Right lobe of liver (tissue), 6 donors: ENCODE measurements at regions of chr7 and their contacts with region 1.

Region 1: DNA sequence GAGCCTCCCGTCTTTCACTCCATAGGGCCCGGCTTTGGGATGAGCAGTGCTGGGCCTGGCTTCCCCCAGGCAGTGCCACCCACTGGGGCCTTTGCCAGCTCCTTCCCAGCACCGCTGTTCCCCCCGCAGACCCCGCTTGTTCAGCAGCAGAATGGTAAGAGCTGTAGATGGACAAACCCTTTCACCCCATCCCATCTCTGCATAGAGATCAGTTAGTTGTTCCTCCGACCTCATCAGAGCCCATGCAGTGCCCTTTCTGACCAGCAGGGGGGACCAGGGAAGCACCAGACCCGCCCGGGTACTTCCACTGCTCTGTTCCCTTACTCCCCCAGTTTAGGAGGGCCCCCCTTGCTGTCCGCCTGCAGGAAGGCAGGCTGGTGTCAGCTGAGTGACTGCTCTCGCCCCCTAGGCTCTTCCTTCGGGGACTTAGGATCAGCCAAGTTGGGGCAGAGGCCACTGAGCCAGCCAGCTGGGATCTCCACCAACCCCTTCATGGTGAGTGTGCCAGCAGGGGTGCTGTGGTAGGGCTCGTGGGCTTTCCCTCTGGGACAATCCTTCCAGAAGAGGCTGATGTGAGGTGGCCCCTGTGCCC is 9.8 kb downstream of the SAP25 start:
- DNase-seq: peak in 2 of 3 donors; percentile 79 to 85
- ATAC-seq: peak; percentile 16 to 37 (median 30)
- H3K4me3 ChIP-seq: no peak overlapping the region
- H3K27ac ChIP-seq: peak overlapping the region in 2 of 3 donors; percentile 40 to 96
- H3K4me1 ChIP-seq: peaks cover 0 to 53% (median 26%) of the 10 kb centered on the region in 4 donors
- H3K27me3 ChIP-seq: no peaks in the 10 kb centered on the region
- CTCF ChIP-seq: peak; percentile 90 to 94 (median 91)
- POLR2A ChIP-seq: no peak

Region 2: GRCh38 chr7:100469227-100470044 is 94.5 kb before region 1 on chr7:
- intact Hi-C with region 1: loop called in 1 of 2 experiments (anchors 5 kb)
- DNase-seq: peak; percentile 88
- ATAC-seq: peak; percentile 85 to 93 (median 89)
- H3K4me3 ChIP-seq: no peak overlapping the region
- H3K27ac ChIP-seq: no peak overlapping the region
- H3K4me1 ChIP-seq: peaks cover 0 to 14% (median 2%) of the 10 kb centered on the region in 4 donors
- H3K27me3 ChIP-seq: no peaks in the 10 kb centered on the region
- CTCF ChIP-seq: peak; percentile 82 to 96 (median 91)
- POLR2A ChIP-seq: no peak

Region 3: DNA sequence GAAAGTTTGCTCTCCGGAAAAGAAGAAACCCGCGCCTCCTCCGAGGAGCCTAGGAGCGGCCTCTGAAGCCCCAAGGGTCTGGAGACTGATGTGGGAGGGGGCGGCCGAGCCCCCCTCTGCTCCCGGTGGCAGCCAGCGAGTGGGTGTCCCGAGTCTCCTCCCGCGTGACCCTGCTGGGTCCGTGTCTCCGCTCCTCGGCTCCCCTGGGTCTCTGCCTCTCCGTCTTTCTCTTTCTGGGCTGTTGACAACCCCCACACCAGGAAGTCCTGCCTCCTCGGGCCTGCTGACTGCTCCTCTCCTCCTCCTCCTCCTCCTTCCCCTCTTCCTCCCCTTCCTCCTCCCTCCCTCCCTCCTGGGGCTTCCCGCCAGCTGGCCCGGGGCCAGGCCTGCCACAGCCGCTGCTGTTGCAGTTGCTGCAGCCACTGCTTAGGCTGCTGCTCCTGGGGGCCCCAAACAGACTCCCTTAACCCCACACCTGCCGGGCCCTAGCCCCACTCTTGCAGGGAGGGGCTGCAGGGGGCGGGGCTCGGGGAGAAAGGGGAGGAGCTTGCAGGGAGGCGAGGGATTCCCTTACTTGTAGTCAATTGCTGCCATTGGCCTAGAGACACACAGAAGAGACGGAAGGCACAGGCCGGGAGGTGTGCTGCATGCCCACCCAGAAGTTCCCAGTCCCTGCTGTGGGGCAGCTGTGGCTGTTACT is 84.8 kb before region 1 on chr7 and contains the start of gene TSC22D4:
- intact Hi-C with region 1: loop called (anchors 5 kb)
- DNase-seq: peak; percentile 95 to 97 (median 96)
- ATAC-seq: peak; percentile 86 to 92 (median 91)
- H3K4me3 ChIP-seq: peak within 1 kb of the TSS; percentile 77 to 96 (median 96)
- H3K27ac ChIP-seq: peak within 1 kb of the TSS; percentile 84 to 95 (median 86)
- H3K4me1 ChIP-seq: peaks cover 0 to 21% (median 3%) of the 10 kb centered on the region in 4 donors
- H3K27me3 ChIP-seq: no peaks in the 10 kb centered on the region
- CTCF ChIP-seq: no peak
- POLR2A ChIP-seq: peak; percentile 66
- total RNA-seq, gene TSC22D4: 12.5 to 20.5 (median 17.0) TPM

Region 4: GRCh38 chr7:100509231-100509630 is 54.7 kb before region 1 on chr7:
- intact Hi-C with region 1: no loop called
- DNase-seq: no peak
- ATAC-seq: no peak
- H3K4me3 ChIP-seq: no peak overlapping the region
- H3K27ac ChIP-seq: no peak overlapping the region
- H3K4me1 ChIP-seq: no peaks in the 10 kb centered on the region
- H3K27me3 ChIP-seq: no peaks in the 10 kb centered on the region
- CTCF ChIP-seq: no peak
- POLR2A ChIP-seq: no peak

Region 5: GRCh38 chr7:100681491-100682227 is 117.8 kb after region 1 on chr7:
- intact Hi-C with region 1: no loop called
- DNase-seq: peak in 2 of 3 donors; percentile 49
- ATAC-seq: no peak
- H3K4me3 ChIP-seq: no peak overlapping the region
- H3K27ac ChIP-seq: no peak overlapping the region
- H3K4me1 ChIP-seq: peaks cover 0 to 5% (median 0%) of the 10 kb centered on the region in 4 donors
- H3K27me3 ChIP-seq: no peaks in the 10 kb centered on the region
- CTCF ChIP-seq: no peak
- POLR2A ChIP-seq: no peak

Region 6: GRCh38 chr7:100691676-100692577 is 128.0 kb after region 1 on chr7:
- intact Hi-C with region 1: loop called in 1 of 2 experiments (anchors 10 kb)
- DNase-seq: peak; percentile 81 to 83 (median 82)
- ATAC-seq: peak; percentile 80 to 86 (median 84)
- H3K4me3 ChIP-seq: no peak overlapping the region
- H3K27ac ChIP-seq: no peak overlapping the region
- H3K4me1 ChIP-seq: peaks cover 2 to 19% (median 10%) of the 10 kb centered on the region in 4 donors
- H3K27me3 ChIP-seq: no peaks in the 10 kb centered on the region
- CTCF ChIP-seq: peak; percentile 85 to 91 (median 90)
- POLR2A ChIP-seq: no peak